ENCODE measurements at regions of chr6 and their contacts with region 1.

Region 1: DNA sequence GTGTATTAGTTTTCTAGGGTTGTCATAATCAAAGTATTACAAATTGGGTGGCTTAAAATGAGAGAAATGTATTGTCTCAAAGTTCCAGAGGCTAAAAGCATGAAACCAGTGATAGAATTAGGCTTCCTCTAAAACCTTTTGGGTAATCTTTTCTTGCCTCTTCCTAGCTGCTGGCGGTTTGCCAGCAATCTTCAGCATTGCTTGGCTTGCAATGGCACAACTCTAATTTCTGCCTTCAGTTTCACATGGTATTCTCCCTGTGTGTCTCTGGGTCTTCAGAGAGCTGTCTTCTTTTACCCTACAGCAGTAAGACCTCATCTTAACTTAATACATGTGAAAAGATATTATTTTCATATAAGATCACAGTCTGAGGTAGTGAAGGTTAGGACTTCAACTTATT is 479.1 kb upstream of the GJE1 start:
- DNase-seq: no peak
- H3K4me3 ChIP-seq: no peak overlapping the region
- H3K27ac ChIP-seq: no peak overlapping the region
- H3K27me3 ChIP-seq: no peaks in the 10 kb centered on the region
- CTCF ChIP-seq: no peak

Region 2: DNA sequence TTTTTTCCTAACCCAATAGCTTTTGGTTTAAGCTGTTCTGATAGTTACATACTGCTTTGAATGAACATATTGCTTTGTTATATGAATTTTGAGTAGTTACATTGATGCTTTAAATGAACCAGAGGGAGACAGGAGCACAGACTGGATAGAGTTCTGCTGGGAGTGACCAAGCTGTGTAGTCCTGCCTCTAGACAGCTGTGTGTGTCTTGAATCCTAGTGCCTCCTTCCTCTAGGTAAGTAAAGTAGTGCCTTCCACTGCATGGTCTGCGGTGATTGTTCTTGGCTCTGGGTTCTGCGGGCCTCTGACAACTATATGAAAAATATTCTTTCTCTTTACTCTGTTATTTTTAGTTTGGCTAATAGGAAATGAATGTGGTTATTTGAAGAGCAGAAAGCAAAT is 602.2 kb after region 1 on chr6:
- intact Hi-C with region 1: loop called in 1 of 2 experiments (anchors 5 kb)
- DNase-seq: no peak
- H3K4me3 ChIP-seq: no peak overlapping the region
- H3K27ac ChIP-seq: no peak overlapping the region
- H3K27me3 ChIP-seq: peaks cover 0 to 3% (median 0%) of the 10 kb centered on the region in 45 donors
- CTCF ChIP-seq: no peak

Measured in dorsolateral prefrontal cortex (tissue), 120 donors.